ENCODE measurements at regions of chr20 and their contacts with region 1.

Region 1: GRCh38 chr20:63495741-63496595 is 2.9 kb downstream of the EEF1A2 start:
- DNase-seq: peak; percentile 87
- ATAC-seq: peak; percentile 61
- H3K4me3 Mint-ChIP-seq: peak overlapping the region; percentile 52
- H3K27ac Mint-ChIP-seq: no peak overlapping the region
- H3K4me1 Mint-ChIP-seq: peaks cover 7% of the 10 kb centered on the region
- H3K27me3 Mint-ChIP-seq: peaks cover 38% of the 10 kb centered on the region
- CTCF ChIP-seq: peak; percentile 97

Region 2: GRCh38 chr20:63014710-63015109 is 481.3 kb before region 1 on chr20:
- CTCF ChIA-PET with region 1: interaction called, 11 read pairs
- POLR2A ChIA-PET with region 1: no interaction called
- DNase-seq: peak; percentile 74
- ATAC-seq: peak; percentile 97
- H3K4me3 Mint-ChIP-seq: peak overlapping the region; percentile 56
- H3K27ac Mint-ChIP-seq: no peak overlapping the region
- H3K4me1 Mint-ChIP-seq: peaks cover 24% of the 10 kb centered on the region
- H3K27me3 Mint-ChIP-seq: peaks cover 33% of the 10 kb centered on the region
- CTCF ChIP-seq: no peak

Region 3: DNA sequence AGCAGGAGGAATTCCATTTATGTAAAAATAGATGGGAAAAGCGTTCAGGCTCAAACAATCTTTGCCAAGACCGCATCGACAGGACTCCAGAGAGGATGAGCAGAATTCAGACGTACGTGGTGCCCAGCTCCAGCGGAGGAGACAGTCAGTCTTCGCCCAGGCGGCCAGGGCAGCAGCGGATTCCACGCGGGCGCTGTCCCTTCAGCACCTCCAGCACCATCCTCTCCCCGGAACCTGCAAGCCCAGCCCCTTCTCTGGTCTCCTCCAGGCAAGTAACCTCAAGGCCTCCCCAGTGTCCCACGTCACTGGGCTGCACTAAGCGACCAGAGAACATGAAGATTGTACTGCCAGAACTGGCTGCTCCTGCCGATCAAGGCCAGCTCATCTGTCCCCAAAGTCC is 20.8 kb before region 1 on chr20:
- CTCF ChIA-PET with region 1: interaction called, 32 read pairs
- POLR2A ChIA-PET with region 1: no interaction called
- DNase-seq: peak; percentile 71
- ATAC-seq: peak; percentile 28
- H3K4me3 Mint-ChIP-seq: no peak overlapping the region
- H3K27ac Mint-ChIP-seq: no peak overlapping the region
- H3K4me1 Mint-ChIP-seq: peaks cover 38% of the 10 kb centered on the region
- H3K27me3 Mint-ChIP-seq: peaks cover 11% of the 10 kb centered on the region
- CTCF ChIP-seq: no peak

Region 4: GRCh38 chr20:63520504-63520933 is 24.6 kb after region 1 on chr20 and contains the start of gene PPDPF:
- CTCF ChIA-PET with region 1: interaction called, 50 read pairs
- POLR2A ChIA-PET with region 1: no interaction called
- DNase-seq: peak; percentile 78
- ATAC-seq: peak; percentile 72
- H3K4me3 Mint-ChIP-seq: peak within 1 kb of the TSS; percentile 88
- H3K27ac Mint-ChIP-seq: peak within 1 kb of the TSS; percentile 79
- H3K4me1 Mint-ChIP-seq: peaks cover 14% of the 10 kb centered on the region
- H3K27me3 Mint-ChIP-seq: peaks cover 9% of the 10 kb centered on the region; the same call in 1 of the 2 replicates
- CTCF ChIP-seq: no peak
- total RNA-seq, gene PPDPF: 170 to 210 TPM (median 205 TPM) in 3 replicates

Region 5: DNA sequence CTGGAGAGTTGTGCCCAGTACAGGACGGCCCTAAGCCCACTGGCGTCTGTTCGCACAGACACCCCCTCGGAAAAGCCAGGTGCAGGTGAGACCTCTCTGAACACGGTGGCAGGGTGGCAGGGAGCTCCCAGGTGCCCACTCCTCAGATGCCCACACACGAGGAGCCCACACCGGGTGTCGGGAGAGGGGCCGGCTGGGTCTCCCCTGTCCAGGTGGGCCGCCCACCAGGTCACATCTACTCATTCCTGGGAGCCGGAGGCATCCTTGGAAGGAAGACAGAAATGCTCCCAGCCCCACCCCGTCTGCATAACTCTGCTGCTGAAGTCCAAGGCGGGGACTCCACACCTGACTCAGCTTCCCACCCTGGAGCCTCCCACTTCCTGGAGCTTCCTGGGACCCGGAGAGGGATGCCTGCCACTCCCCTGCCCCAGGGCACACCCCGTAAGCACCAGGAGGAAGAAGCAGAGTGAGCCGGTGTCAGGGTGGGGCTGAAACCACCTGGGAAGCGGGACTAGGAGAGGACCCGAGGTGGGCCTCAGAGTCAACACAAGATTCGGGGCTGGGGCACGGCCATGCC is 49.1 kb after region 1 on chr20:
- CTCF ChIA-PET with region 1: no interaction called
- POLR2A ChIA-PET with region 1: no interaction called
- DNase-seq: no peak
- ATAC-seq: no peak
- H3K4me3 Mint-ChIP-seq: no peak overlapping the region
- H3K27ac Mint-ChIP-seq: no peak overlapping the region
- H3K4me1 Mint-ChIP-seq: peaks cover 11% of the 10 kb centered on the region
- H3K27me3 Mint-ChIP-seq: no peaks in the 10 kb centered on the region
- CTCF ChIP-seq: no peak

Region 6: DNA sequence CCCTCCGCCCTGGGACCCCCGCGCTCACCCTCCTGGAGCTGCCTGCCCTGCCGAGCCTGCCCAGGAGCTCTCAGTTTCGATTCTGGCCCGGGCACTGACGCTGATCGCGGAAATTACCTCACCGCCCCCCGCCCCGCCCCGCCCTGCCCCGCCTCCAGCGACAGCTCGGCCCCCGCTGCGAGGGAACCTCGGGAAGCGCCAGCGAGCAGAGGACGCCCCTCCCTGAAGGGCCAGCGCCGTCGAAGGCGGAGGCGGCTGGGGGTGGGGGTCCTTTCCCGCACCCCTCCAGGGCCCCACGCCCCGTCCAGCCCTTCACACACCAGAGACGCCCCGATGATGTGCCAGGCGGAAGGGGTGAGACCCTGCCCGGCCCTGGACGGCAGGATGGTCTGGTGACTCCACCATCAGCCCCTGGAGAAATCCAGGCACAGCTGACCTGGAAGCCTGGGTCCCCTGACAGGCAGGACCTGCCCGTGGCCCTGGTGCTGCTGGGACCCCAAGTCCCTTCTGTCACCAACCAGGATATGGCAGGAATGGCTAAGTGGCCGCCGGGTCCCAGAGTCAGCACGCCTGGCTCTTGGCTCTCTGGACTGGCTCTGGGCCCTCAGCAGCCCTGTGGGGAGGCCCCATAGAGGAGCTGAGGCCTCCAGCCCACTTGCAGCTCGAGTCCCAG is 78.3 kb after region 1 on chr20 and contains the start of gene HELZ2:
- CTCF ChIA-PET with region 1: interaction called, 12 read pairs
- POLR2A ChIA-PET with region 1: no interaction called
- DNase-seq: peak; percentile 66
- ATAC-seq: peak; percentile 67
- H3K4me3 Mint-ChIP-seq: peak within 1 kb of the TSS; percentile 78
- H3K27ac Mint-ChIP-seq: peak within 1 kb of the TSS; percentile 72; the same call in 1 of the 2 replicates
- H3K4me1 Mint-ChIP-seq: no peaks in the 10 kb centered on the region
- H3K27me3 Mint-ChIP-seq: no peaks in the 10 kb centered on the region
- CTCF ChIP-seq: no peak
- total RNA-seq, gene HELZ2: 27.5 to 32.6 TPM (median 32.4 TPM) in 3 replicates

Measured in WTC11 (cell line).